Prostate gland (tissue), 2 donors: ENCODE measurements at regions of chr5 and their contacts with region 1.

Region 1: DNA sequence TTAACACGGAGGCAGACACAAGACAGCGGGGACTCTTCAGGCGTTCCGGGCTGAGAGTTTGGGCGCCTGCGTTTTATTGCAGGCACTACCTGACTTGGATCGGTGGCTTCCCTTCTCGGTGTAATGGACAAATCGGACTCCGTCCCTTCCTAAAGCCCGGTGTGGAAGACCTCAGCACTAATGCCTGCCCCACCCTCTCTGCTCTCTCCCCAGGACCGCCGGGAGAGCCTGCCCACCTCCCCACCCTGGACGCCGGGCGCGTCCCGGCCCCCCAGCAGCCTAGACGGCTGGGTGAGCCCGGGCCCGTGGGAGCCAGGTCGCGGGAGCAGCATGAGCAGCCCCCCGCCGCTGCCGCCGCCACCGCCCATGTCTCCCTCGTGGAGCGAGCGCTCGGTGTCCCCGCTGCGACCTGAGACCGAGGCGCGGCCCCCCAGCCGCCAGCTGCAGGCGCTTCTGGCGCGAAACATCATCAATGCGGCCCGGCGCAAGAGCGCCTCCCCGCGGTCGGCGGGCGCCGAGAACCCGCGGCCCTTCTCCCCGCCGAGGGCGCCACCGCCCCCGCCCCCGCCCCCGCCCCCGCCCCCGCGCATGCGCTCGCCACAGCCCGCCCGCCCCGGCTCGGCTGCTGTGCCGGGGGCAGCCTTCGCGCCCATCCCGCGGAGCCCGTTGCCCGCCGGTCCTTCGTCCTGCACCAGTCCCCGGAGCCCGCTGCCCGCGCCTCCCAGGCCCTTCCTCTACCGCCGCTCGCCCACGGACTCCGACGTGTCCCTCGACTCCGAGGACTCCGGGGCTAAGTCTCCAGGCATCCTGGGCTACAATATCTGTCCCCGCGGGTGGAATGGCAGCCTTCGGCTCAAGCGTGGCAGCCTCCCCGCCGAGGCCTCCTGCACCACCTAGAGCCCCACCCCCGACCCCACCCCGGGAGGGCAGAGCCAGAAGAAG is 4.6 kb upstream of the MYOZ3 start:
- DNase-seq: peak; percentile 58
- H3K4me3 ChIP-seq: peak overlapping the region; percentile 42 to 44
- H3K27ac ChIP-seq: peak overlapping the region; percentile 60 to 72
- H3K4me1 ChIP-seq: no peaks in the 10 kb centered on the region
- H3K27me3 ChIP-seq: no peaks in the 10 kb centered on the region
- CTCF ChIP-seq: peak; percentile 67 to 81 (median 74)
- POLR2A ChIP-seq: no peak

Region 2: DNA sequence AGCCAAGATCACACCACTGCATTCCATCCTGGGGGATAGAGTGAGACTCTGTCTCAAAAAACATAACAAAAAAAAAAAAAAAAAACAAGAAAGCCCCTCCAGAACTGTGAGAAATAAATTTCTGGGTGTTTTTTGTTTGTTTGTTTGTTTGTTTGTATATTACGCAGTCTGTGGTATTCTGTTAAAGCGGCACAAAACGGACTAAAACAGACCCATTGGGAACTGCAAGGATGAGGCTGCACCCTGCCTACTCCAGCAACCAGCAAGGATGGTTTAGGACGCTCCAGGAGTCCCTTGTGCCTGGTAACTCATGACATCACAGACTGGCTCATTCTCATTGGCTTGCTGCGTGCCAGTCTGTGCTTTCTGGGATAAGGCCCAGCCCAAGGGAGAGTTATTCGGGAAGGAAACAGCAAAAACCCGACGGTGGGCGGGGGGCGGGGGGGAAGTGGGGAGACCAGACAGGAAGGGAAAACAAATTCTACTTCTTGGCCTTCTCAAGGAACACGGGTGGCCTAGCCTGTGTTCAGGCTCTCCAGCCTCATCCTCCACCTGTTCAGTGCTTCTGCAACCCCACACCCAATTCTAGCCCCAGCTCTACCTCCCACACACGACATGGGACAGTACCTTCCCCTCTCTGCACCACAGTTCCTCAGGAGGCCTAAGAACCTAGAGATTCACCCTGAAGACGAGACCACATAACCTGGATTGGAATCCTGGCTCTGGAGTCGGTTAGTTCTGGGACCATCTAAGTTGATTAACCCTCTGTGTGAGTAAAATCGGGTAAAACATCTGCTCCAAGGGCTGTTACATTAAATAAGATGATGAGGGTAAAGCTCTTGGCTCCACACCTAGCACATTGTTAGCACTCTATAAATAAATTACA is 246.6 kb before region 1 on chr5:
- intact Hi-C with region 1: no loop called
- DNase-seq: peak; percentile 78
- H3K4me3 ChIP-seq: no peak overlapping the region
- H3K27ac ChIP-seq: peak overlapping the region; percentile 63 to 70
- H3K4me1 ChIP-seq: peaks cover 2% of the 10 kb centered on the region
- H3K27me3 ChIP-seq: no peaks in the 10 kb centered on the region
- CTCF ChIP-seq: no peak
- POLR2A ChIP-seq: peak; percentile 44

Region 3: GRCh38 chr5:150589871-150590601 is 66.4 kb before region 1 on chr5:
- intact Hi-C with region 1: loop called (anchors 2 kb)
- DNase-seq: no peak
- H3K4me3 ChIP-seq: no peak overlapping the region
- H3K27ac ChIP-seq: peak overlapping the region; percentile 33 to 40
- H3K4me1 ChIP-seq: peaks cover 2% of the 10 kb centered on the region
- H3K27me3 ChIP-seq: no peaks in the 10 kb centered on the region
- CTCF ChIP-seq: peak; percentile 25 to 77 (median 59)
- POLR2A ChIP-seq: no peak